ENCODE measurements at regions of chr2 and their contacts with region 1.

Region 1: DNA sequence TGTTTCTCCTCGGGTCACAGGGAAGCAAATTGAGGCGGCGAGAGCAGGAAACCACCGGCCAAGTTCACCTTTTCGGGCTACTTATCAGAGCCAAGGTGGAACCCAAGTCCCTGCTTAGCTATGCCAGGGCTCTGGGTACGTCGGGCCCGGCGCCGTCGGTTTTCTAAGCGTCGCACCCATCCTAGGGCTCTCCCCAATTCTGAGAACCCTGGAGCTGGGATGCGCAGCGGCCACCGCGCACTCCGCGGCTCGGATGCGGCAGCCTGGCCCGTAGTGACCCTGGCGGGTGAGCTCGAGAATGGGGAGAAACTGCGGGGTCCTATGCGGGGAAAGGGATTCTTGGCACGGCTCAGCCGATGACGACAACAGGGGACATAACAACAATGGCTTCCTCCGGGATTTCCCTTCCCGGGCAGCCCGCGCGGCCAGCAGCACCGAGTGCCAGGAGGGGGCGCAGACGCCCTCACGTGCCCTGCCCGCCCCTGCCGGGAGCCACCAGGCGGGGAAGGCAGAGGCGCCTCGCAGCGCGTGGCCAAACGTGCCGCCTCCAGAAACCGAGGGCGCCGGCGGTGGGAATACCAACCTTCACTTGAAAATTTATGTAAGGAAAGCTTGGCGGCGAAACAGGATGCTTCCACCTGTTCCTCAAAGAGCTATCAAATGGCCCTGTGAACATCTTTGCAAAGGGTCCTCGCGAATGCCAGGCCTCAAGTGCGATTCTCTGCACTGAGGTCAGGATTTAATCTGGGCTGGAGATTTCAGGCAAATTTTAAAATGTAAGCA is 2.1 kb upstream of the SLC30A3 start:
- DNase-seq: peak; percentile 57
- ATAC-seq: peak; percentile 14
- H3K4me3 Mint-ChIP-seq: peak overlapping the region; percentile 19
- H3K27ac Mint-ChIP-seq: no peak overlapping the region
- H3K4me1 Mint-ChIP-seq: peaks cover 22% of the 10 kb centered on the region
- H3K27me3 Mint-ChIP-seq: peaks cover 45% of the 10 kb centered on the region

Region 2: GRCh38 chr2:27133905-27134780 is 130.8 kb before region 1 on chr2 and contains the start of gene PREB:
- CTCF ChIA-PET with region 1: no interaction called
- DNase-seq: peak; percentile 99
- ATAC-seq: peak; percentile 98
- H3K4me3 Mint-ChIP-seq: peak within 1 kb of the TSS; percentile 93
- H3K27ac Mint-ChIP-seq: peak within 1 kb of the TSS; percentile 97
- H3K4me1 Mint-ChIP-seq: peaks cover 26% of the 10 kb centered on the region
- H3K27me3 Mint-ChIP-seq: no peaks in the 10 kb centered on the region
- total RNA-seq, gene PREB: 61.6 to 69.4 TPM

Region 3: GRCh38 chr2:27249891-27250651 is 14.9 kb before region 1 on chr2:
- CTCF ChIA-PET with region 1: interaction called, 14 read pairs
- DNase-seq: peak; percentile 70
- ATAC-seq: peak; percentile 83
- H3K4me3 Mint-ChIP-seq: no peak overlapping the region
- H3K27ac Mint-ChIP-seq: no peak overlapping the region
- H3K4me1 Mint-ChIP-seq: no peaks in the 10 kb centered on the region
- H3K27me3 Mint-ChIP-seq: peaks cover 22% of the 10 kb centered on the region